MCF 10A (cell line): ENCODE measurements at regions of chr7 and their contacts with region 1.

Region 1: DNA sequence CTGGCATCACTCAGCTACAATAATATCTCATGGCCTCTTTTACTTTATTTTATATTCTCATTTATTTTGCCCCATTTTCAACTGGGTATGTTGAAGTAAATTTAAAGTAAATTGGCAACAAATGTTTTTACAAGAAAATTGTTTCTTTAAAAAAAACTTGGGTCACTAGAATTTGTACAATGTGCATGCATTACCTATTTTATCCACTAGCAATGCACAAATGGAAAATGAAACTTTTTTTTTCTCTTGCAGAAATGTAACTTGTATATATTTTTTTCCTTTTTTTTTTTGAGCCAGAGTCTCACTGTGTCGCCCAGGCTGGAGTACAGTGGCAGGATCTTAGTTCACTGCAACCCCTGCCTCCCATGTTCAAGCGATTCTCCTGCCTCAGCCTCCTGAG is 10.3 kb upstream of the H2AZ2 start:
- DNase-seq: no peak
- H3K4me3 Mint-ChIP-seq: no peak overlapping the region
- H3K27ac Mint-ChIP-seq: no peak overlapping the region
- H3K4me1 Mint-ChIP-seq: no peaks in the 10 kb centered on the region
- H3K27me3 Mint-ChIP-seq: no peaks in the 10 kb centered on the region
- CTCF ChIP-seq: no peak

Region 2: DNA sequence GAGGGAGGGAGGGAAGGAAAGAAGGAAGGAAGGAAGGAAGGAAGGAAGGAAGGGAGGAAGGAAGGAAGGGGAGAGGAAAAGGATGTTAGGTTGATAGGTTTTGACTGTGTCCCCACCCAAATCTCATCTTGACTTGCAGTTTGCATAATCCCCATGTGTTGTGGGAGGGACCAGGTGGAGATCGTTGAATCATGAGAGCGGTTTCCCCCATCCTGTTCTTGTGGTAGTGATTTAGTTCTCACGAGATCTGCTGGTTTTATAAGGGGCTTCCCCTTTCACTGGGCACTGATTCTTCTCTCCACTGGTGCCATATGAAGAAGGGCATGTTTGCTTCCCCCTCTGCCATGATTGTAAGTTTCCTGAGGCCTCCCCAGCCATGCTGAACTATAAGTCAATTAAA is 352.6 kb before region 1 on chr7:
- CTCF ChIA-PET with region 1: no interaction called
- POLR2A ChIA-PET with region 1: no interaction called
- intact Hi-C with region 1: no loop called
- DNase-seq: no peak
- H3K4me3 Mint-ChIP-seq: no peak overlapping the region
- H3K27ac Mint-ChIP-seq: no peak overlapping the region
- H3K4me1 Mint-ChIP-seq: no peaks in the 10 kb centered on the region
- H3K27me3 Mint-ChIP-seq: no peaks in the 10 kb centered on the region
- CTCF ChIP-seq: no peak

Region 3: DNA sequence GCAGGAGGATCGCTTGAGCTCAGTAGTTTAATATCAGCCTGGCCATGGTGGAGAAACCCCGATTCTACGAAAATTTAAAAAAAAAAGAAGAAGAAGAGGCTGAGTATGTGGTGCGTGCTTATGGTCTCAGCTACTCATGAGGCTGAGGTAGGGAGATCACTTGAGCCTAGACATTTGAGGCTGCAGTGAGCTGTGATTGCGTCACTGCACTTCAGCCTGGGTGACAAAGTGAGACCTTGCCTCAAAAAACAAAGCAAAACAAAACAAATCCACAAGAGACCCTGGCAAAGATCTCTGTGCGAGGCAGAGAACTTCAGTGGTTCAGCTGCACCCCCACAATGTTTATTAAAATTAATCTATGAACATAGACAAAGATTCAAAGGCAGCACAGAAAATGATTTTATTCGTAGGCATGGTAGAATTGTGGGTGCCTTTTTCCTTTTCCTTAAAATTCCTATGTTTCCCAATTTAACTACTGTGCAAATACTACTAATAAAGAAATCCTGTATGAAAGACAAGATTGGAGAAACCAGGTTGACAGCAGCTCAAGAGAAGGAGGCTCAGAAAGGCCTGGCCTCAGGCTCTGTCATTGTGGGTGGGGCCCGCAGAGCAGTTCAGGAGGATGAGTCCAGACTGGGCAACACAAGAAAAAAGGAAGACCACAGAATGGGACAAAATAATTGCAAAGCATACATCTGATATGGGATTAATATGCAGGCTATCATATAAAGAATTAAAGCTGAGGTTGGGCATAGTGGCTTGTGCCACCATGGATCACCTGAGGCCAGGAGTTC is 51.6 kb after region 1 on chr7:
- CTCF ChIA-PET with region 1: no interaction called
- POLR2A ChIA-PET with region 1: no interaction called
- intact Hi-C with region 1: no loop called
- DNase-seq: no peak
- H3K4me3 Mint-ChIP-seq: no peak overlapping the region
- H3K27ac Mint-ChIP-seq: no peak overlapping the region
- H3K4me1 Mint-ChIP-seq: no peaks in the 10 kb centered on the region
- H3K27me3 Mint-ChIP-seq: no peaks in the 10 kb centered on the region
- CTCF ChIP-seq: no peak

Region 4: DNA sequence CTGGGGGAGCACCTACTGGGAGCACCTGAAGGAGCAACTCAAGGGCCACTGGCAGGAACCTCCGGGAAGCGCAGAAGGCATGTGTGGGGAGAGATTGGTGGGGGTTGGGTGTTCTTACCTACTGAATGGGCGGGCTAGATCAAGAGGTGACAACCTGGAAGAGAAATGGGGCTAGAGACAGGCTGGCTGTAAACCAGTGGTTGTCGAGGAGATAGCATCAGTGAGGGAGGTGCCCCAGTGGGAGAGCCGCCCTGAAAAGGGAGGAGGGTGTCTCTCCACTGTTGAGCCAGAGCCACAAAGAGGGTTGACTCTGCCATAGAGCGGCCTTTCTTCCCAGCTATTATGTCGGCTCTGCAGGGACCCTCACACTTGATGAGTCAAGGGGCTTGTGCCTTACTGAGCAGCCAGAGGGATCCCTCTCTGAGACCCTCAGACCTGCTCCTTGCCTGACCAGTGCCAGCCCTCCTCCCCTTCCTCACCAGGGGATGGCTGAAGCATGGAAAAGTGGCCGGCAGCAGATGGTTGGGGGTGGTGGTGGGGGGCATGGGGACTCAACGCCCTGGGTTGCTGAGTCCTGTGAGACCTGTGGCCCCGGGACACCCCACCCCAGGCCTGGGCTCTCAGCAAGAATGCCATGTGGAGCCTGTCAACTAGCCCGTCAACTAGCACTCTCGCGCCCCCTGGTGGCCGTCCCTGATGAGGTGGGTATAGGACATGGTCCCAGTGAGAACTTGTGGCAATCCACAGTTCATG is 63.6 kb after region 1 on chr7:
- CTCF ChIA-PET with region 1: interaction called, 27 read pairs
- POLR2A ChIA-PET with region 1: interaction called, 3 read pairs
- intact Hi-C with region 1: loop called (anchors 1 kb)
- DNase-seq: peak; percentile 81
- H3K4me3 Mint-ChIP-seq: no peak overlapping the region
- H3K27ac Mint-ChIP-seq: no peak overlapping the region
- H3K4me1 Mint-ChIP-seq: no peaks in the 10 kb centered on the region
- H3K27me3 Mint-ChIP-seq: no peaks in the 10 kb centered on the region
- CTCF ChIP-seq: peak; percentile 82

Region 5: GRCh38 chr7:44964384-44964825 is 106.2 kb after region 1 on chr7:
- CTCF ChIA-PET with region 1: interaction called, 16 read pairs
- POLR2A ChIA-PET with region 1: no interaction called
- intact Hi-C with region 1: loop called (anchors 1 kb)
- DNase-seq: no peak
- H3K4me3 Mint-ChIP-seq: no peak overlapping the region
- H3K27ac Mint-ChIP-seq: no peak overlapping the region
- H3K4me1 Mint-ChIP-seq: peaks cover 14% of the 10 kb centered on the region
- H3K27me3 Mint-ChIP-seq: no peaks in the 10 kb centered on the region
- CTCF ChIP-seq: peak; percentile 32

Region 6: GRCh38 chr7:45013465-45013967 is 155.4 kb after region 1 on chr7:
- CTCF ChIA-PET with region 1: no interaction called
- POLR2A ChIA-PET with region 1: no interaction called
- intact Hi-C with region 1: no loop called
- DNase-seq: no peak
- H3K4me3 Mint-ChIP-seq: no peak overlapping the region
- H3K27ac Mint-ChIP-seq: no peak overlapping the region
- H3K4me1 Mint-ChIP-seq: peaks cover 8% of the 10 kb centered on the region
- H3K27me3 Mint-ChIP-seq: no peaks in the 10 kb centered on the region
- CTCF ChIP-seq: no peak